Endothelial cell of umbilical vein (primary cell): ENCODE measurements at regions of chr2 and their contacts with region 1.

Region 1: DNA sequence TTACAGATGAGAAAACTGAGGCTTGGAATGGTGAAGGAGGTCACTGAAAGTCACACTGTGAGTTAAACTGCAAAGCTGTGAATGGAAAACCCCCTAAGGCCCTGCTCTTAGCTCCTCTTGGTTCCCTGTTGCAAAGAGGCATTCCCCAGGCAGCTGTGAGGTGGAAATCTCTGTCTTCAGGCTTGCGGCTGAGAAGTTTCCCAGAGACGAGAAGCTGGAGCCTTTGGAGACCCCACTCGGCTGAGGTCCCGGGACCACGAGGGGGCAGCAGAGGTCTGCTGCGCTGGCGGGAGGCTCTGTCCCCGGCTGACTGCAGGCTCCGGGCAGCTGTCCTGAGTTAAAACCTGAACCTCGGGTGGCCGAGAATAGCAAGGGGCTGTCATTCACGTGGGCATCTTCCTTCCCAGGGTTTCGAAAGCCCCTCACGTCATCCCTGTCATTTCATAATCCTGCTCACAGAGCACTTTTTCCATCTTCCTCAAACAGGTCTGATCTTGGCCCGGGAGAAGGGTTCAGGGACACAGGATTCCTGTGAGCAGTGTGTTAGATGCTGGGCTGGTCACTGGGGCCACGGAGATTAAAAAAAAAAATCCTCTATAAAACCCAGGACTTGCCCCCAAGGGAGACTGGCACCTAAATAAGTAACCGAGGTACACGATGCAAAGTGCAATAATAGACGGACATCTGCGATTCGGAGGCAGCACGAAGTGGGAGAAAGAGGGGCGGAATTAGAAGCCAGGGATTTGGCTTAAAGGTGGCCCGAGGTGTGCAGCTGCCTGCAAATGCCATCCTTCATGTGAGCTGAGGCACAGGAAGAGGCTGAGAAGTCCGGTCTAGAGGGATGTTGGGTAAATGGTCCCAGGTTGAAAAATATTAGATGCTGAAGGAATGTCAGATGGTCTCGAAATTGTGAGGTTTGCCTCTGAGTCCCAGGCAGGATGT is 24.6 kb upstream of the ATOH8 start:
- DNase-seq: peak; percentile 76
- H3K4me3 ChIP-seq: no peak overlapping the region
- H3K27ac ChIP-seq: no peak overlapping the region
- H3K4me1 ChIP-seq: peaks cover 4% of the 10 kb centered on the region
- H3K27me3 ChIP-seq: peaks cover 0 to 3% of the 10 kb centered on the region in 2 experiments
- CTCF ChIP-seq: peak; percentile 97 to 99
- POLR2A ChIP-seq: no peak

Region 2: GRCh38 chr2:84749442-84749841 is 979.7 kb before region 1 on chr2:
- CTCF ChIA-PET with region 1: no interaction called
- POLR2A ChIA-PET with region 1: no interaction called
- dilution Hi-C with region 1: no loop called
- intact Hi-C with region 1: no loop called
- DNase-seq: no peak
- H3K4me3 ChIP-seq: no peak overlapping the region
- H3K27ac ChIP-seq: no peak overlapping the region
- H3K4me1 ChIP-seq: no peaks in the 10 kb centered on the region
- H3K27me3 ChIP-seq: peaks cover 0 to 2% of the 10 kb centered on the region in 2 experiments
- CTCF ChIP-seq: no peak
- POLR2A ChIP-seq: no peak

Region 3: GRCh38 chr2:85354286-85355072 is 374.7 kb before region 1 on chr2 and contains the starts of genes ELMOD3 and RETSAT:
- CTCF ChIA-PET with region 1: no interaction called
- POLR2A ChIA-PET with region 1: no interaction called
- dilution Hi-C with region 1: no loop called
- intact Hi-C with region 1: no loop called
- DNase-seq: peak; percentile 99
- H3K4me3 ChIP-seq: peak within 1 kb of the TSS; percentile 78 to 97 (median 87)
- H3K27ac ChIP-seq: peak within 1 kb of the TSS; percentile 44
- H3K4me1 ChIP-seq: peaks cover 8% of the 10 kb centered on the region
- H3K27me3 ChIP-seq: no peaks in the 10 kb centered on the region
- CTCF ChIP-seq: no peak
- POLR2A ChIP-seq: peak; percentile 98
- total RNA-seq, gene ELMOD3: 12.3 and 18.5 TPM in 2 replicates
- total RNA-seq, gene RETSAT: 49.9 and 59.1 TPM in 2 replicates

Region 4: DNA sequence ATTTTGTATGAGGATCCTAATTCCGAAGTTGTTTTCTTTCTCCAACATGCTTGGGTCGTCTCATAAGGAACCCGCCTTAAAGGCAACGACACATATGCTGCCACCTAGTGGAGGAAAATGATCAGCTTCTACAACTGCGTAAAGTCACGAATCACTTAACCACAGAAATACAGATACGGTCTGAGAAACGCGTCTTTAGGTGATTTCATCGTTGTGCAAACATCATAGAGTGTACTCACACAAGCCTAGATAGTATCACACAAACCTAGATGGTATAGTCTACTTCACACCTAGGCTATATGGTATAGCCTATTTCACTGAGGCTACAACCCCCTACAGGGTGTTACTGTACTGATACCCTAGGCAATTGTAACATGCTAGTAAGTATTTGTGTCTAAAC is 21.9 kb before region 1 on chr2:
- CTCF ChIA-PET with region 1: interaction called, 15 read pairs
- POLR2A ChIA-PET with region 1: no interaction called
- dilution Hi-C with region 1: no loop called
- intact Hi-C with region 1: no loop called
- DNase-seq: peak; percentile 81
- H3K4me3 ChIP-seq: no peak overlapping the region
- H3K27ac ChIP-seq: no peak overlapping the region
- H3K4me1 ChIP-seq: peaks cover 18% of the 10 kb centered on the region
- H3K27me3 ChIP-seq: no peaks in the 10 kb centered on the region
- CTCF ChIP-seq: peak; percentile 77 to 87
- POLR2A ChIP-seq: no peak

Region 5: GRCh38 chr2:85765081-85765731 is 36.1 kb after region 1 on chr2:
- CTCF ChIA-PET with region 1: interaction called, 10 read pairs
- POLR2A ChIA-PET with region 1: no interaction called
- dilution Hi-C with region 1: no loop called
- intact Hi-C with region 1: no loop called
- DNase-seq: peak; percentile 30
- H3K4me3 ChIP-seq: no peak overlapping the region
- H3K27ac ChIP-seq: peak overlapping the region; percentile 40
- H3K4me1 ChIP-seq: peaks cover 35% of the 10 kb centered on the region
- H3K27me3 ChIP-seq: no peaks in the 10 kb centered on the region
- CTCF ChIP-seq: no peak
- POLR2A ChIP-seq: no peak

Region 6: DNA sequence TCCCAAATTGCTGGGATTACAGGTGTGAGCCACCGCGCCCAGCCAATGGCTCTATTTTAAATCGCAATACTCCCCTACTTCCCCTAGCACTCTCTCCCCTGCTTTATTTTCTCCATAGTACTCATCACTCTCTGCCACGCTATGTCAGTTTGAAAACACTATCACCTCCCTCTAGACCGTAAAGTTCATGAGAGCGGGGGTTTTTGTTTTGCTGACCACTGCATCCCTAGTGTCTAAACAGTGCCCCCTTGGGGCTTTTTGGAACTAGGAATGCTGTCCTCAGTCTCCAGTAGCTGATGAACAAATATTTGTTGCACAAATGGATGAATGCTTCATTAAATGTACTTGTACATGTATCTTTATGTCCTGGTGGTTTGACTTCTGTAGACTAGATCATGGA is 68.8 kb after region 1 on chr2:
- CTCF ChIA-PET with region 1: interaction called, 42 read pairs
- POLR2A ChIA-PET with region 1: no interaction called
- dilution Hi-C with region 1: loop called (anchors 25 kb)
- intact Hi-C with region 1: loop called (anchors 1 kb)
- DNase-seq: peak; percentile 60
- H3K4me3 ChIP-seq: no peak overlapping the region
- H3K27ac ChIP-seq: no peak overlapping the region
- H3K4me1 ChIP-seq: peaks cover 15% of the 10 kb centered on the region
- H3K27me3 ChIP-seq: no peaks in the 10 kb centered on the region
- CTCF ChIP-seq: peak; percentile 62 to 70
- POLR2A ChIP-seq: no peak

Region 7: DNA sequence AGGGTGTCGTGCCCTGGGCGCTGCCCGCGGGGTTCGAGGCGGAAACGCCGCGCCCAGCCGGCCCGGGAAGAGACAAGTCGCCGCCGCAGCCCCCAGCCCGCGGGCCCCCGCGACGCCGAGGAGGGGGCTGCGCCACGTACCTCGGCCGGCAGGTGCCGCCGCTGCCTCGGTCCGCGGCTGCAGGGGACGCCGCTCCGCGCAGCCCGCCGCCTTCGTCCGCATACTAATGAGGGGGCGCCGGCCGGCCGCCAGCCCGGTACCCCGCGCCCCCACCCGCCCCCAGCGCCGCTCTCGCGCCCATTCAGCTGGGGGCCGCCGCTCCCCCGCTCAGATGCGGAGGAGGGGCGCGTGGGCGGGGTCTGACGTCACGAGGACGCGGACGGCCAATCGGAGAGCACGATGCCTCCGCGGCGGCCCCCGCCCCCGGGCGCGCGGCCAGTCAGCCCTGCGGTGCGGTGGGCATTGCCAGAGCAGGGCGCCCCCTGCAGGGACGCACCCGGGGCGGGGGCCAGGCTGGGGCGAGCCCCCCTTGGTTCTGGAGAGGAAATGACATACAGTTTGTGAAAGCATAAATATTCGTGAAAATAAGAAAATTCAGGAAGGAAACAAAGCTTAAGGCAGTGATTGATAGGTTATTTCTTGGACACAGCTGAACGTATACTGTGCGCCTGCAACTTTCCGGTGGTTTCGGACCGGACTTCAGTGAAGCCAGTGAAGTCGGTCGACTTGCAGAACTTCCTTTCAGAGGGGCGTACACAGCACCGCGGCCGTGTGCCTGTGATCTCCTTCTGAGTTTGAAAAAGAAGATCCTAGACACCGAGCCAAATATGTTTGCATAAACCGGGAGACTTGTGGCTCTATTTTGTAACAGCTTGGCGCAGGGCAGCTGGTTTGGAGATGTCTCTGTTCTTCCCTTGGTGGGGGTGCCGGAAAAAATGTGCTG is 159.8 kb after region 1 on chr2 and contains the start of gene ST3GAL5:
- CTCF ChIA-PET with region 1: interaction called, 8 read pairs
- POLR2A ChIA-PET with region 1: no interaction called
- dilution Hi-C with region 1: no loop called
- intact Hi-C with region 1: loop called (anchors 5 kb)
- DNase-seq: peak; percentile 97
- H3K4me3 ChIP-seq: peak within 1 kb of the TSS; percentile 55 to 80 (median 69)
- H3K27ac ChIP-seq: peak within 1 kb of the TSS; percentile 52
- H3K4me1 ChIP-seq: peaks cover 33% of the 10 kb centered on the region
- H3K27me3 ChIP-seq: no peaks in the 10 kb centered on the region
- CTCF ChIP-seq: peak; percentile 82 to 97
- POLR2A ChIP-seq: peak; percentile 40
- total RNA-seq, gene ST3GAL5: 12.7 and 16.0 TPM in 2 replicates